GM18951 (cell line): ENCODE measurements at regions of chr6 and their contacts with region 1.

Region 1: DNA sequence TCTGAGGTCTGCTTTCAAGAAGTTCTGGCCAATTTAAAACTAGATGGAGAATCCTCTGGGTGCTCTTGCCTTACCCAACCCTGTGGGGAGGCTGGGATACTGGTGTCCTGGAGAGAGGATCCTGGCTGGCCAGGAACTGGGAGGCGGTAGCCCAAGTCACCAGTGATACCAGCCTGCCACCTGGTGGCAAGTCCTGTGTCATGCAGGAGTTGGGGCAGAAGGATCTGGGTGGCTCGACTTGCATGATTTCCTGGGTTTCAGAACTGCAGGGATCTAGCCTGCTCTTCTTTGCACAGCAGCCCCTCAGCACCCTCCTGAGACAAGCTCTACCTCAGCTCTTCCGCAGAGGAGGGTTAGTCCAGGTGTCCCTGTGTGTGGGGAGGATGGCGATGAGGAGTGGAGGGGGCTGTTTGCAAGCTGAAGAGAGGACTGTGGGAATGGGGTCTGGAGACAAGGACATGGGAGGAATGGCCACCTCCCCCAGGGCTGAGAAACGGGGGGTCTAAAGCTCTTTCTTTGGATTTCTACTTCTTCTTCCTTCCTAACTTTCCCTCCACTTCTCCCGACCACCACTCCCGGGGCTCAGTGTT is 4.2 kb downstream of the KCNK17 start:
- POLR2A ChIP-seq: no peak

Region 2: DNA sequence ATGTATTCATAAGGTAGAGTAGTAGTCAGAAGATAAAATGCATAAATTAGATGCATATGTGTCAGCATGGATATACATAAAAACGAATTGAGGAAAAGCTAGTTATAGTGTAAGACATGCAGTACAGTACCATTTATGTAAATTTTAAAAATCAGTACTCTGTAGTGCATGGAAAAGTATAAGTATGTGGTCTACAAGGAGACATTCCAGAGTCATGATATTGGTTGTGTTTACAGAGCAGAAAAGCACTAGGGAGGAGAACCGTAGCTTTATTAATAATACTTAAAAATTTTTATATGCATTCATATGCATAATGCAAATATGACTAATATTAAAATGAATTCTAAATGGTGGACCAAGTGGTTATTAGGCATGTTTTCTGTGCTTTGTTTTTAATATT is 1270.5 kb before region 1 on chr6:
- in situ Hi-C with region 1: no loop called
- POLR2A ChIP-seq: no peak

Region 3: DNA sequence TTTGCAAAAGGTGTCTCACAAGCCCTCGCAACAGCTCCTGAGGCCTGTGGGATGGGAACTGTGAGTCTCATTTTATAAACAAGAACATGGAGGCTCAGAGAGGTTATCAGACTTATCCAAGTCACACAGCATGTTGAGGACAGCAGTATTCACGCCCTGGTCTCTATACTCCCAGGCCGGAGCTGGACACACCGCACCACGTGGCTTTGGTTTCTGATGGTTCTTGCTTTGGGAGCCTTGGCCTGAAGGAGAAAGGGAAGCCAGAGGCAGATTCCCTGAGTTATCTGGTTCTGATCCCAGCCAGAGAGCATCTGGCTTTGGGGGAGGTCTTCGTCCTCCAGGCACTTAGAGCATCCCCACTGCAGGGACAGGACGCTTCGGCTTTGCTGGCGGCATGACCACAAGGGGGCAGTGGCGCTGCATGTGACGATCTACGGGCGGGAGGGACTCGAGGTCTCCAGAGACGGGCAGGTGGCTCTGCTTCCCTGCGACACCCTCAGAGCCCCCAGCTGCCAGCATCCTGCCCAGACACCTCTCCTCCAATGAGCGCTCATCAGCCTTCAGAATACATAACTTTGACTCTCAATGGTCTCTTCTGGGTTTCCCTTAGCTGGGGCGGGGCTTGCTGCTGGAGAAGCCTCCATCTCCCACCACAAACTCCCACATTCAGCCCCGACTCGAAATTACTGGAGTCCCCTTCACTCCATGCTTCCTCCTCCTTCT is 143.7 kb before region 1 on chr6:
- in situ Hi-C with region 1: loop called (anchors 5 kb)
- POLR2A ChIP-seq: no peak